Activated T-helper 1 cell treated with anti-CD3 and anti-CD28 coated beads, Interleukin-12 subunit alpha, Interleukin-12 subunit beta, Interleukin-2, Interleukin-4 antibody, amounts not matched to agents 30 ng/mL and 10 ng/mL and 1 ng/mL, durations not matched to agents 14 hours and 24 hours and 36 hours (primary cell): ENCODE measurements at regions of chr6 and their contacts with region 1.

Region 1: DNA sequence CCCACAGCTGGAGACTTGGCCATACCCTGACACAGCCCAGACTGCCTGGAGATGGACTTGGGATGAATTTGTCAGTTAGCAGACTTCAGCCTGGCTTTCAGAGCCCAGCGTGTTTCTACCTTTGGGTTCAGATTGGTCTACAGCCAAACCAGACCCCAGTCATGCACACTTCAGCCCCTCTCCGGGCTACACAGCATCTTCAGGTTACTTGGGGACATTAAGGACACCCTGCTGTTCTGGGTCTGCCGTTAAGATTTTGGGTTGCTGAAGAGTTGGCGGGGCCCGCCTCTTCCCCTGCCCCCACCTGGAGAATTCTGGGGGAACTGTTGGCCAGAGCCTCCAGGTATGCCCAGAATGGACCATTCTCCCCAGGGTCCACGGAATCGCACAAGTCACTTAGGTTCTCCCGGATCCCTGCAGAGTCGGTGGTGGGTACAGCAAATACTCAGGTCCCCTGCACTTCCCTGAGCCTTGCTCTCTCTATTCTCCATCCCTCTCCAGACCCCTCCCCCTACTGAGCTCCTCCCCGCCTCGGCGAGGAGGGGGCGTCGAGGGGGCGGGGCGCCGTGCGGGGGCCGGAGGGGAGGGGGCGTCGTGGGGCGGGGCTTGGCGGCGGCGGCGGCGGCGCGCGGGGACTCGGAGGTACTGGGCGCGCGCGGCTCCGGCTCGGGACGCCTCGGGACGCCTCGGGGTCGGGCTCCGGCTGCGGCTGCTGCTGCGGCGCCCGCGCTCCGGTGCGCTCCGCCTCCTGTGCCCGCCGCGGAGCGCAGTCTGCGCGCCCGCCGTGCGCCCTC is at the start of gene PTK7:
- DNase-seq: no peak
- H3K4me3 Mint-ChIP-seq: peak within 1 kb of the TSS; percentile 59
- H3K27ac Mint-ChIP-seq: no peak within 1 kb of the TSS
- H3K4me1 Mint-ChIP-seq: no peaks in the 10 kb centered on the region
- H3K27me3 Mint-ChIP-seq: peaks cover 23% of the 10 kb centered on the region
- total RNA-seq, gene PTK7: 3.3 and 3.7 TPM in 2 replicates

Region 2: GRCh38 chr6:43059168-43060033 is 16.5 kb before region 1 on chr6 and contains the starts of genes KLC4 and MRPL2:
- intact Hi-C with region 1: no loop called
- DNase-seq: peak; percentile 96
- H3K4me3 Mint-ChIP-seq: peak within 1 kb of the TSS; percentile 96
- H3K27ac Mint-ChIP-seq: peak within 1 kb of the TSS; percentile 98
- H3K4me1 Mint-ChIP-seq: peaks cover 41% of the 10 kb centered on the region
- H3K27me3 Mint-ChIP-seq: no peaks in the 10 kb centered on the region
- total RNA-seq, gene KLC4: 12.7 and 13.7 TPM in 2 replicates
- total RNA-seq, gene MRPL2: 89.6 and 97.4 TPM in 2 replicates

Region 3: GRCh38 chr6:43086022-43086658 is 10.3 kb after region 1 on chr6:
- intact Hi-C with region 1: loop called (anchors 1 kb)
- DNase-seq: no peak
- H3K4me3 Mint-ChIP-seq: no peak overlapping the region
- H3K27ac Mint-ChIP-seq: no peak overlapping the region
- H3K4me1 Mint-ChIP-seq: peaks cover 7% of the 10 kb centered on the region
- H3K27me3 Mint-ChIP-seq: peaks cover 18% of the 10 kb centered on the region